Heart left ventricle (tissue), 16 donors: ENCODE measurements at regions of chr13 and their contacts with region 1.

Region 1: DNA sequence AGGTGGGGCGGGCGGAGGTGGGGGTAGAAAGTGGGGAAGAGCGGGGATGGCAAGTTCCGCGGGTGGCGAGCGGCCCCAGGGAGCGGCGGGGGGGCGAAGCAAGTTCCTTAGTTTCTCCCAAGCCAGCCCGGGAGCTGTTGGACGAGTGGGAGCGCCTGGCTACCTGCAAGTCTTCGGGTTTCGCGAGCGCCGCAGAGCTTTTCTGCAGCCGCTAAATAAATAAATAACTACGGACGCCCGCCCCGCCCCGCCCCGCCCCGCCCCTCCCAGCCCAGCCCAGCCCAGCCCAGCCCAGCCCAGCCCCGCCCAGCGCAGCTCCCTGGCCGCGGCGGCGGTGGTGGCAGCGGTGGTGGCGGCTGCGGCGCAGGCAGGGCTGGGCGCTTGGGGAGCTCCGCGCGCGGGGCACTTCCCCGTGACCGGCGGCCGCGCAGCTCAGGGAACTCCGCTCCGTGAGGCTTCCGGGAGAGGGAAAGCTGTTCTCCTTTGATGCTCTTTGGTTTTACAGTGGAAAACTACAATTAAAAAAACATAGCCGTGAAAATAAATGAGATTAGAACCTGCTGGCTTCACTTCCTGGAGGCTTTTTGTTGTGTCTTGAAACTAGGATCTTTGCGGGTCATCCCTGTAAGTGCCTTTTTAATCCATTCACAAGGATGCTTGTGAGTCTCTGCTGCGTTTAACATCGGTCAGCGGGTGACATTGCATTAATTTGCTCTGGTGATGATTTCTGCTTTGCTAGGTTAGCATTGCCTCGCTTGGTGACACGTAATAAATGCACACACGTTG is at the start of gene UBE2L5:
- DNase-seq: peak; percentile 78 to 91 (median 84)
- ATAC-seq: peak; percentile 82 to 95 (median 90)
- H3K4me3 ChIP-seq: peak within 1 kb of the TSS; percentile 16 to 81 (median 67)
- H3K27ac ChIP-seq: peak within 1 kb of the TSS; percentile 80 to 98 (median 94)
- H3K4me1 ChIP-seq: peaks cover 0 to 18% (median 7%) of the 10 kb centered on the region in 12 donors
- H3K27me3 ChIP-seq: no peaks in the 10 kb centered on the region
- CTCF ChIP-seq: no peak
- POLR2A ChIP-seq: peak in 1 of 2 donors; percentile 51
- total RNA-seq, gene UBE2L5: 0.32 TPM in 1 of 9 donors, not detected in the others

Region 2: DNA sequence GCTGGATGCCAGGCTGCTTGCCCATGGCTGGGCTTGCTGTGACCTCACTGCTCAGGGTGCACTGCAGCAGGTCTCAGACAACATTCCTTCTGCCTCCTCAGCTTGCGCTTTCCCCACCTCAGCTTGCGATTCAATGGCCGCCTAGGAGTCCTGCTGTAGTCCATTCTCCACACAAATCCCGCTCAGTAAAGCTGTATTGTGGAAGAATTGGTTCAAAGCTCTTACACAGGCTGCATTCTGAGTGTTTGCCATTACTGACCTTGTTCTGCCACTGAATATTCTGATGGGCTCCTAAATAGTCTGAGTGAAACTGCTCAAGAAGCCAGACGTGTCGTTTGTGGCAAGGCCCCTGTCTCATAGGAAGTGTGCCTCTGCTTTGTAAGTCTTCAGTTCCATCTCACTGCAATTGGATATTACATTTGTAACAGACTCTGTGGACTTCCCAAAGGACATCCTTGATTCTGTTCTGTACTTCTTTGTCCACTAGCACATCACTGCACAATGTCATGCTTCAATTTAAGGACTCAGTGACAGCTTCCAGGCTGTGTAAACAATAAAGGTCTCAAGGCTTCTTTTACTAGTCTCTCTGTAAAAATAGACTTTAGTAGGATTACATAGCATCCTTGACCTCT is 164.7 kb before region 1 on chr13:
- intact Hi-C with region 1: loop called in 1 of 10 experiments (anchors 10 kb)
- DNase-seq: peak in 2 of 5 donors; percentile 29 to 49
- ATAC-seq: peak; percentile 76 to 86 (median 81)
- H3K4me3 ChIP-seq: no peak overlapping the region
- H3K27ac ChIP-seq: peak overlapping the region in 9 of 12 donors; percentile 3 to 57 (median 28)
- H3K4me1 ChIP-seq: peaks cover 0 to 21% (median 9%) of the 10 kb centered on the region in 12 donors
- H3K27me3 ChIP-seq: no peaks in the 10 kb centered on the region
- CTCF ChIP-seq: no peak
- POLR2A ChIP-seq: no peak

Region 3: DNA sequence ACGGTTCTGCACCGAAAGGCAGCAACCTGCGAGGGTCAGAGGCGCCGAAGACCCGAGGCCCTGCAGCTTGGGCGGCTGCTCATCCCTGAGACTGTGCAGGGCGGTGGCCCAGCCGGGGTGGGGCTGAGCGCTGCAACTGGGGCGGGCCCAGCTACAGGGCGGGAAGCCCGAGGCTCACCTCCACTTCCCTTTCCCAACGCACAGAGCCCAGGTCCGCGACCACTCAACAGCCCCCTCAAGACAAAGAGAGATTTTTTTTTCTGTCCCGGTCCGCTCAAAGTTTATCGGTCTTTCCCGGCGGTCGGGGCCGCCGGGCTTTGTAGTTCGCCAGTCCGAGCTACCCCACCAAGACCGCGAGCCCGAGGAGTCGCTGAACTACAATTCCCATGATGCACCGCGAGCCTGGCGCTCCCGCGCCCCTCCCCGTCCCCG is 115.5 kb before region 1 on chr13:
- intact Hi-C with region 1: loop called in 2 of 10 experiments (anchors 5 kb)
- DNase-seq: peak; percentile 95 to 96 (median 96)
- ATAC-seq: peak; percentile 93 to 97 (median 96)
- H3K4me3 ChIP-seq: peak overlapping the region; percentile 80 to 100 (median 96)
- H3K27ac ChIP-seq: peak overlapping the region; percentile 87 to 98 (median 96)
- H3K4me1 ChIP-seq: peaks cover 3 to 56% (median 28%) of the 10 kb centered on the region in 12 donors
- H3K27me3 ChIP-seq: no peaks in the 10 kb centered on the region
- CTCF ChIP-seq: no peak
- POLR2A ChIP-seq: no peak

Region 4: DNA sequence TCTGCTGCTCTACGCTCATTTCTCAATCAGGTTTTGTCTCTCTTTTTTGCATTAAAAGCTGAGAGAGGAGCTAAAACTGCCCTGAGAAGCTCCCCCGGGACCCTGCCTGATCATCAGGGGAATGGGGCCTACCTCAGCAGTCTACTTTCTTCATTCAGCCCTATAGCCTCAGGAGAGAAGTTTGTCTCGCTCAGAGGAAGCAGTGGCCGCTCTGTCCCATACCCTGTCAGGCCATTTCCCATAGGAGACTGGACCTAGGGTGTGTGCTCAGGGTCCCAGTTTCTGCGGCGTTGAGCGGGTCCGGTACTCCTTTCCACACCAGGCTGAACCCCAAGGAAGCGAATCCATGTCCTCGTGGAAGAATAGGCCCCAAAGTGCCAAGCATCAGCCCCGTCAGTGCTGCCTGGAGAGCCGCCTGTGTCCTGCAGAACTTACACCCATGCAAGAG is 21.7 kb after region 1 on chr13:
- intact Hi-C with region 1: loop called in 2 of 10 experiments (anchors 1 kb)
- DNase-seq: no peak
- ATAC-seq: no peak
- H3K4me3 ChIP-seq: no peak overlapping the region
- H3K27ac ChIP-seq: no peak overlapping the region
- H3K4me1 ChIP-seq: peaks cover 0 to 19% (median 11%) of the 10 kb centered on the region in 12 donors
- H3K27me3 ChIP-seq: no peaks in the 10 kb centered on the region
- CTCF ChIP-seq: no peak
- POLR2A ChIP-seq: no peak

Region 5: GRCh38 chr13:30457306-30457891 is 35.2 kb after region 1 on chr13:
- intact Hi-C with region 1: loop called in 4 of 10 experiments (anchors 5 kb)
- DNase-seq: no peak
- ATAC-seq: no peak
- H3K4me3 ChIP-seq: no peak overlapping the region
- H3K27ac ChIP-seq: no peak overlapping the region
- H3K4me1 ChIP-seq: peaks cover 0 to 20% (median 11%) of the 10 kb centered on the region in 12 donors
- H3K27me3 ChIP-seq: no peaks in the 10 kb centered on the region
- CTCF ChIP-seq: no peak
- POLR2A ChIP-seq: no peak